Naive thymus-derived CD4-positive, alpha-beta T cell (primary cell): ENCODE measurements at regions of chr3 and their contacts with region 1.

Region 1: DNA sequence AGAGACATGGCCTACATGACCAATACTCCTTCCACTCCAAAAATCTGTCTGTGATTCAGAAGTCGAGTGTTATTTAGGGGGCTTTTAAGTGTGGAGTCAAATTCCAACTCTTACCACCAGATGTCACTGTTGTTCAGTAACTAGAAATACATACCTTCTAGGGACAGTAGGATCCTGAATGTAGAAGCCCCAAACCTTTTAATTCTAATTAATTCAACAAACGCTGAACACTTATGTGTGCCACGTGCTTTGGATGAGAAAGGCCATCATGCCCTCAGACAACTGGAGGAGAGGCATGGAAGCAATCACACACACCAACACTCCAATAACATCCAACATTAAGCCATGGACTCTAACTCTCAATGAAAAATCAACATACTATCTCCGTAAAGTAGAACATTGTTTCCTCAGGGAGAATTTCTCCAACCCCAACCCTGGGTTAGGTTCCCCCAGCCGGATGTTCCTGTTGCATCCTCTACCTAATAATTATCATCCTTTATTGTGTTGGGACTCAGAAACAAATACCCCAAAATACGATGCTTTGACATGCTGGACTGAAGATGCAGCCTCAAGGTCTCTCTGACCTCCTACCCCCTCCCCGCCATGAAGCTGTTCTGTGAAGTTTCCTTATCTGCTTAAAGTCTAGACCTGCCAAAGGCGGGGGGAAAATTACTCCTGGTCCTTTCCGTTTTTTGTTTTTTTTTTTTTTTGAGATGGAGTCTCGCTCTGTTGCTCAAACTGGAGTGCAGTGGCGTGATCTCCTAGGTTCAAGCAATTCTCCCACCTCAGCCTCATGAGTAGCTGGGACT is 8.0 kb upstream of the CCDC13 start:
- DNase-seq: peak in 7 of 9 donors; percentile 41 to 67 (median 54)
- ATAC-seq: peak; percentile 87
- H3K4me3 ChIP-seq: no peak overlapping the region
- H3K4me3 Mint-ChIP-seq: no peak overlapping the region
- H3K27ac ChIP-seq: no peak overlapping the region
- H3K27ac Mint-ChIP-seq: peak overlapping the region in 2 of 9 donors; percentile 14
- H3K4me1 ChIP-seq: no peaks in the 10 kb centered on the region
- H3K4me1 Mint-ChIP-seq: peaks cover 0 to 5% (median 0%) of the 10 kb centered on the region in 7 donors
- H3K27me3 ChIP-seq: no peaks in the 10 kb centered on the region
- H3K27me3 Mint-ChIP-seq: no peaks in the 10 kb centered on the region

Region 2: DNA sequence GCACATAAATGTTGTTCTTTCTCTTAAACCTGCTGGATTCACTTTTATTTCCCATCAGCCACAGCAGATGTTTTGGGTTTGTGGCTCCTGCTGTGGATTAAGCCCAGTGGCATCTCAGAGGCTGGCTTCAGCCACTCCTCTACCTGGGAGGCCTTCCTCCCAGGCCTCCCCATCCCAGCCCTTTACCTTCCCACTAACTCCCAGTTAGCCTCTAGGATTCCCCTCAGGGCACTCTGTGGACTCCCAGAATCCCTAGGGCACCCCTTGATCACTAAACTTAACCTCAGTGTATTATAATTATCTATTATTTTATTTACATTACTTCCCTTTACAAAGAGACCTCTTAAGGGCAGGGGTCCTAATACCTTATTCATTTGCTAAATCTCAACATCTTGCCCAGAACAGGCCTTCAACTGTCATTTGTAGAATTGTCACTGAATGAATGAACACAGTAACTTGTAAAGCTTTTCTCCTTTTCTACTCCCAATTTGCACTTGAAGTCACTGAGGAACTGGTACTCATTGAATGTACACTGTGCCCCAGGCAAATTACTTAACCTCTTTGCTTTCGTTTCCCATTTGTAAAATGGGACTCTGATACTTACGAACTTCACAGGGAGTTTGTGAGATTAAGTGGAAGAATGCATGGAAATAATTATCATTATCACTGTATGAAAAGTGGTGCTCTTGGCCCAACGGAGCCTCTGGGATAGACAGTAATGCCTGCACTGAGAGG is 16.4 kb before region 1 on chr3:
- CTCF ChIA-PET with region 1: no interaction called
- POLR2A ChIA-PET with region 1: no interaction called
- intact Hi-C with region 1: no loop called
- DNase-seq: peak in 1 of 9 donors; percentile 10
- ATAC-seq: no peak
- H3K4me3 ChIP-seq: no peak overlapping the region
- H3K4me3 Mint-ChIP-seq: no peak overlapping the region
- H3K27ac ChIP-seq: no peak overlapping the region
- H3K27ac Mint-ChIP-seq: no peak overlapping the region
- H3K4me1 ChIP-seq: no peaks in the 10 kb centered on the region
- H3K4me1 Mint-ChIP-seq: peaks cover 0 to 7% (median 0%) of the 10 kb centered on the region in 7 donors
- H3K27me3 ChIP-seq: no peaks in the 10 kb centered on the region
- H3K27me3 Mint-ChIP-seq: peaks cover 0 to 20% (median 0%) of the 10 kb centered on the region in 5 donors

Region 3: GRCh38 chr3:42831321-42831713 is 50.2 kb after region 1 on chr3:
- CTCF ChIA-PET with region 1: interaction called, 3 read pairs
- POLR2A ChIA-PET with region 1: no interaction called
- intact Hi-C with region 1: loop called (anchors 1 to 2 kb)
- DNase-seq: peak; percentile 45 to 71 (median 65)
- ATAC-seq: peak; percentile 81
- H3K4me3 ChIP-seq: no peak overlapping the region
- H3K4me3 Mint-ChIP-seq: no peak overlapping the region
- H3K27ac ChIP-seq: no peak overlapping the region
- H3K27ac Mint-ChIP-seq: peak overlapping the region in 1 of 9 donors; percentile 12
- H3K4me1 ChIP-seq: no peaks in the 10 kb centered on the region
- H3K4me1 Mint-ChIP-seq: peaks cover 0 to 14% (median 5%) of the 10 kb centered on the region in 7 donors
- H3K27me3 ChIP-seq: no peaks in the 10 kb centered on the region
- H3K27me3 Mint-ChIP-seq: peaks cover 0 to 18% (median 4%) of the 10 kb centered on the region in 5 donors

Region 4: GRCh38 chr3:42839616-42840015 is 58.5 kb after region 1 on chr3:
- CTCF ChIA-PET with region 1: interaction called, 17 read pairs
- POLR2A ChIA-PET with region 1: no interaction called
- intact Hi-C with region 1: loop called (anchors 1 kb)
- DNase-seq: peak in 7 of 9 donors; percentile 19 to 58 (median 51)
- ATAC-seq: peak; percentile 96
- H3K4me3 ChIP-seq: no peak overlapping the region
- H3K4me3 Mint-ChIP-seq: no peak overlapping the region
- H3K27ac ChIP-seq: no peak overlapping the region
- H3K27ac Mint-ChIP-seq: no peak overlapping the region
- H3K4me1 ChIP-seq: no peaks in the 10 kb centered on the region
- H3K4me1 Mint-ChIP-seq: peaks cover 0 to 4% (median 0%) of the 10 kb centered on the region in 7 donors
- H3K27me3 ChIP-seq: no peaks in the 10 kb centered on the region
- H3K27me3 Mint-ChIP-seq: peaks cover 0 to 5% (median 3%) of the 10 kb centered on the region in 5 donors